ENCODE measurements at regions of chr1 and their contacts with region 1.

Region 1: DNA sequence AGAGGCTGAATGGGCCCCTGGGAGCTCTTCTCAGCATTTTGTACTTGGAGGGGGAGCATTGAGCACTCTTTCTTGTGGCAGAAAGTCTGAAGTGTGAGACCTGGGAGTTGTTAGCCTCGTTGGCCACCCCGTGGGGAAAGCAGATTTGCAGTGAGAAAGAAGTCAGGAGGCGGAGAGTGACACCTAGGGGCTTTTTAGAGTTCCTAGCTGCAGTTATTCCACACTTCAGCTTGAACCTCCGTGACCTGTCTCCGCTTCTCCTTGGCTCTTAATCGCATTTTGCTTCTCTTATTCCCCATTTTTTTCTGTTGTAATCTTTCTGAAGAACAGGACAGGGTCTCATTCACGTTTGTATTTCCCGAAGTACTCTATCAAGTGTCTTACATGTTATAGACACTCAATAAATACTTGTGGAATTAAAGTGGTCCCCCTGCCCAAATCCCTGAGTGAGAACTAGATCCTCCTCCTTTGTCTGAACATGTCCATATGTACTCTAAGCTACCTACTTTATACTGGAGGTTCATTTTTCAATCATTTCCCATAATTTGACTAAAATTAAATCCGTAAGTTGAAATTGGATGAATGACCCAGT is 14.5 kb upstream of the C1orf141 start:
- H3K4me3 ChIP-seq: no peak overlapping the region
- H3K27ac ChIP-seq: no peak overlapping the region
- H3K4me1 ChIP-seq: no peaks in the 10 kb centered on the region
- CTCF ChIP-seq: peak; percentile 90

Region 2: DNA sequence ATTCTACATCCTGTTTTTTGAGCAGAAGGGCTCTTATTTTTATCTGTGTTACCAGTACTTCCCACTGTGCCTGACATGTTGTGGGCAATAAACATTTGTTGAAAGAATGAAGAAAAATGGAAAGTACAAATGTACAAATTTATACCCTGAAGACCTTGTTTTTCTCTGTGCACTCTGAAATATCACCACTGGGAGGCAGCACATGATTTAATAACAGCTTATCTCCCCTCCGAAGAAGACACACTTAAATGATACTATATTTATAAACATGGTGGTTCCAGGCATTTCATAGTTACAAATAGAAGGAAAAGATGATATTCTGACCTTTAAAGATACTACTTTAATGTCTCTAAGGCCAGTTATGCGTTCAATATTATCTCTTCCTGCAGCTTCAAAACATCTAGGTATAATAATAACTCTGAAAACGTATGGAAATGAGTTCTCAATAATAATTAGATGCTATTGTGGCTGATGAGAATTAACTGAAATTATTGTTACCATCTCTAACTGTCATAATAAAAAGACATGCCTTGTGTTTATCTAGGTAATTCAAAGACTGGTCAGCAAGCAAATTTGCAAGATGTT is 384.2 kb before region 1 on chr1:
- CTCF ChIA-PET with region 1: interaction called, 50 read pairs
- POLR2A ChIA-PET with region 1: no interaction called
- H3K4me3 ChIP-seq: no peak overlapping the region
- H3K27ac ChIP-seq: no peak overlapping the region
- H3K4me1 ChIP-seq: no peaks in the 10 kb centered on the region
- CTCF ChIP-seq: no peak

Region 3: DNA sequence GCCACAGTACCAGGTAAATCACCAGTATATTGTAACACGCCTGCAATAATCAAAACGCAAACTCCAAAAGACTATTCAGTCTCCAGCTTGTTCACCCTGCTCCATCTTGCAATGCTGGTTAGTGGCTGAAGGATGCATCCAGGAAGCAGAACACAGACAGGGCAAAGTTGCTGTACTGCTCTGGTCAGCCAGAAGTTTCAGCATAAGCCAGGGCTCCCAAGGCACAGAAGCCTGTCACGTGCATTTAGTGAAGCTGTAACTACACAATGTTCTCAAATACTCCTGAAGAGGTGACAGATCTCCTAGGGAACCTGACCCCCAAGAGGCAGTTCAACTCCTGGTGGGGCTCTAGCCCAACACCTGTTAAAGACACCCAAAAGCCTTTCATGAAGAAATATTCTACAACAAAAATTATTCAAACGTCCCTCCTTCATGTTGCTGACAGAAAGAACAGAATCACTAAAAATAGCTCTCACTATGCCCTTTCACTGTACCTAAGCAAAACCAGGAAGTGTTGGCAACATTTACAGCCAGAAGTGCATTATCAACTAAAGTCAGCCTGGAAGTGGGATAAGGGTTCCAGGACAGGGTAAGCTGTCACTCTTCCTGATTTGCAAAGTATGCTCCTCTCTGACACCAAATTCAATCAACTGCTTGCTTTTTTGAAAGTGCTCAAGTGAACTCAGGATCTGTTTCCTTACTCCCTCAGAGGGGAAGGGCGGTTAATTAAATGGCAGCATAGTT is 147.4 kb before region 1 on chr1:
- CTCF ChIA-PET with region 1: interaction called, 56 read pairs
- POLR2A ChIA-PET with region 1: no interaction called
- H3K4me3 ChIP-seq: no peak overlapping the region
- H3K27ac ChIP-seq: no peak overlapping the region
- H3K4me1 ChIP-seq: no peaks in the 10 kb centered on the region
- CTCF ChIP-seq: no peak

Region 4: DNA sequence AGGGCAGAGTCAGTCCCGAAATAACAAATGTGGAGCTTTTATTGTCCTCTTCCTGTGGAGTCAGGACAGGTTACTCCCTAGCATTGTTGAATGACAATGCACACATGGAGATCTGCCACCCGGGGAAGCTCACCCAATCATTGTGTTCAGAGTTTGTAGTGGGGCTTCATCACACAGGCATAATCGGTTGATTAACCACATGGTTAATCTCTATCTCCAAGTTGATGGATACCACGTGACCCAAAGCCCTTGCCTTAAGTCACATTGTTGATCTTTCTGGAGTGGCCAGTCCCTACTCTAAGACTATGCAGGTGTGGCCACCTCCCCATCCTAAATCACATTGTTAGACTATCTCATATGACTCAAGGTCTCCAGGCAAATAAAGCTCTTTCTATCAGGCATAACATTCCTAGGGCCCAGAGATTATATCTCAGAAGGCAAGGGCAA is 11.9 kb before region 1 on chr1:
- CTCF ChIA-PET with region 1: interaction called, 12 read pairs
- POLR2A ChIA-PET with region 1: no interaction called
- H3K4me3 ChIP-seq: no peak overlapping the region
- H3K27ac ChIP-seq: no peak overlapping the region
- H3K4me1 ChIP-seq: no peaks in the 10 kb centered on the region
- CTCF ChIP-seq: no peak

Region 5: GRCh38 chr1:67214420-67215174 is 65.3 kb after region 1 on chr1:
- CTCF ChIA-PET with region 1: interaction called, 36 read pairs
- POLR2A ChIA-PET with region 1: no interaction called
- H3K4me3 ChIP-seq: no peak overlapping the region
- H3K27ac ChIP-seq: no peak overlapping the region
- H3K4me1 ChIP-seq: no peaks in the 10 kb centered on the region
- CTCF ChIP-seq: no peak